ENCODE measurements at regions of chr10 and their contacts with region 1.

Region 1: DNA sequence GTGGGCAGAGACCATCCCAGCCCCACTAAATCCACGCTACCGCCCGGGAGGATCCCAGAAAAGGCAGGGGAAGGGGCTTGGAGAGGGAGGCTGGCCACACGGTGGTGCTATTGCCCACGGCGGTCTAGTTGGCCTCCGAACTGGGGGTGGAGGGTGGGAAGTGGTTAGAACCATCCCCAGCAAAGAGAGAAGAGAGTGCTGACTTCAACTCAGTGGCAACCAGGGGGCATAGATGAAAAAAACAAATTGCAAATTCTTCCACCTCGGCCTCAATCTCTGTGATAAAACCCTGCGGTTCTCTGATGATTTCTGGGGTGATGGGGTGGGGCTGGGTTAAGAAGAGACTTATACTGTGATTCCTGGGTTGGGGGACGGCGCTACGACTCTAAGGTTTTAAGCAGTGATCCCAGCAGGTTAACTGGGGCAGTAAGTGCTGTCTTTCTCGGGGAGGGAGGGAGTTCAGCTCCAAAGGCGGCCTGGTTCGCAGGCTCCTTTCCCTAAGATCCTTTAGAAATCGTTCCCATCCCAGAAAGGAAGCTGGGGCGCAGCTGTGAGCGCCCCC is 154.5 kb upstream of the LYZL2 start:
- DNase-seq: peak; percentile 89
- H3K4me3 Mint-ChIP-seq: peak overlapping the region; percentile 69
- H3K27ac Mint-ChIP-seq: peak overlapping the region; percentile 45
- H3K4me1 Mint-ChIP-seq: peaks cover 26% of the 10 kb centered on the region
- H3K27me3 Mint-ChIP-seq: peaks cover 14% of the 10 kb centered on the region
- CTCF ChIP-seq: peak; percentile 81

Region 2: DNA sequence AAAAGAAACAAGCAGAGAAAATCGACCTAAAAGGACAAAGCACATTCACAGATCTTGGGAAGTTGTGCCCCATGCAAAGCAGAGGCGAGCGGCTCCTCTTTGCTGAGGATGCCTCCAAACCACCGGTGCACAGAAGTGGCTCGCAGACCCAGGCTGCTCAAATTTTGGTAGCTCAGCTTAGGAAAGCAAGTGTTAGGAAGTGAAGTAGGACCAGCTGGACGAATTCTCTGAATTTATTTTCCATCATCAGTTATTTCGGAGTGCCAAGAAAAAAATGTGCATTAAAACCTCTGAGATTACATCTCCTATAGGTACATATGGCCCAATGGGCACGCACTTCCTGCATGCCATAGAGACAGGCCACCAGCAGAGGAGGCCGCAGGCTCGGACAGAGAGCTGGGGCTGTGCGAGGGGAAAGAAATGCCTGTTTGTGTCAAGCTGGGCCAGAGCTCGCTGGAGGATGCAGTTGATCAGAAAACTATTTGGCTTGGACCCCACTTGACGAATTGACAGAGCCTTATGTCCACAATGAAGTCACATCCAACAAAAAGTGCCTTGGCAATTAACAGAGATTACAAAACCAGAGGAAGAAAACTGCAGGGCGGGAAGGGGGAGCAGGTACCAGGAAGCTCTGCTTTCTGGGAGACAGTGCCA is 32.2 kb before region 1 on chr10:
- CTCF ChIA-PET with region 1: interaction called, 18 read pairs
- intact Hi-C with region 1: no loop called
- DNase-seq: peak; percentile 87
- H3K4me3 Mint-ChIP-seq: no peak overlapping the region
- H3K27ac Mint-ChIP-seq: no peak overlapping the region
- H3K4me1 Mint-ChIP-seq: no peaks in the 10 kb centered on the region
- H3K27me3 Mint-ChIP-seq: peaks cover 14% of the 10 kb centered on the region
- CTCF ChIP-seq: peak; percentile 97

Region 3: DNA sequence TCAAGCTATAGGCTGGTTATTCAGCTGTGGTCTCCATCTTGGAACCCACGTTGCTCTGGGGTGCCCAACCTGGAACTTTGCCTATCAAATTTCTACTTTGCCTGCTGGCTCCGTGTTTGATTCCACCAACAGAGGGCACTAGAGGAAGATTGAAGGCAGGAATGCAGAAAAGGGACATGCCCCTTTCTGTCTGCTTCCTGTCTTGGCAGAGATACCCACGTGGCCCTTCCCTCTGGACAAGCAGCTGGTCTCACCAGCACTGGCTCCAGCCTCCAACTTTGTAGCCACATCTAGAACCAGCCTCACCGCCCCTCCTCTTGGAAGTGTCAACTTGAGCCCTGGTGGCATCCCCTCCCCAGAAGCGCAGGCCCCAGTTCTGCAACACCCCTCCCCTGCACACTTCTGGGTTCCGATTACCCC is 299.8 kb after region 1 on chr10:
- CTCF ChIA-PET with region 1: interaction called, 3 read pairs
- intact Hi-C with region 1: loop called (anchors 5 kb)
- DNase-seq: peak; percentile 75
- H3K4me3 Mint-ChIP-seq: no peak overlapping the region
- H3K27ac Mint-ChIP-seq: no peak overlapping the region
- H3K4me1 Mint-ChIP-seq: peaks cover 8% of the 10 kb centered on the region
- H3K27me3 Mint-ChIP-seq: no peaks in the 10 kb centered on the region
- CTCF ChIP-seq: peak; percentile 53

Region 4: GRCh38 chr10:31340343-31340742 is 556.3 kb after region 1 on chr10:
- CTCF ChIA-PET with region 1: no interaction called
- intact Hi-C with region 1: loop called (anchors 10 kb)
- DNase-seq: no peak
- H3K4me3 Mint-ChIP-seq: no peak overlapping the region
- H3K27ac Mint-ChIP-seq: no peak overlapping the region
- H3K4me1 Mint-ChIP-seq: no peaks in the 10 kb centered on the region
- H3K27me3 Mint-ChIP-seq: no peaks in the 10 kb centered on the region
- CTCF ChIP-seq: no peak

Region 5: GRCh38 chr10:31467796-31468535 is 683.9 kb after region 1 on chr10:
- CTCF ChIA-PET with region 1: interaction called, 5 read pairs
- intact Hi-C with region 1: loop called (anchors 1 kb)
- DNase-seq: peak; percentile 49
- H3K4me3 Mint-ChIP-seq: no peak overlapping the region
- H3K27ac Mint-ChIP-seq: no peak overlapping the region
- H3K4me1 Mint-ChIP-seq: no peaks in the 10 kb centered on the region
- H3K27me3 Mint-ChIP-seq: no peaks in the 10 kb centered on the region
- CTCF ChIP-seq: peak; percentile 80

Region 6: GRCh38 chr10:31490858-31491504 is 707.0 kb after region 1 on chr10:
- CTCF ChIA-PET with region 1: interaction called, 8 read pairs
- intact Hi-C with region 1: loop called (anchors 1 kb)
- DNase-seq: peak; percentile 37
- H3K4me3 Mint-ChIP-seq: no peak overlapping the region
- H3K27ac Mint-ChIP-seq: no peak overlapping the region
- H3K4me1 Mint-ChIP-seq: no peaks in the 10 kb centered on the region
- H3K27me3 Mint-ChIP-seq: no peaks in the 10 kb centered on the region
- CTCF ChIP-seq: peak; percentile 57

Measured in Calu3 (cell line).